ENCODE measurements at regions of chr1 and their contacts with region 1.

Region 1: GRCh38 chr1:162056043-162056442 is 13.4 kb upstream of the NOS1AP start:
- DNase-seq: peak; percentile 62 to 66
- H3K4me3 ChIP-seq: no peak overlapping the region
- H3K27ac ChIP-seq: no peak overlapping the region
- H3K4me1 ChIP-seq: no peaks in the 10 kb centered on the region
- H3K27me3 ChIP-seq: no peaks in the 10 kb centered on the region
- CTCF ChIP-seq: peak; percentile 68 to 92 (median 84)
- POLR2A ChIP-seq: no peak

Region 2: GRCh38 chr1:162177126-162177525 is 121.1 kb after region 1 on chr1:
- intact Hi-C with region 1: no loop called
- DNase-seq: no peak
- H3K4me3 ChIP-seq: no peak overlapping the region
- H3K27ac ChIP-seq: no peak overlapping the region
- H3K4me1 ChIP-seq: no peaks in the 10 kb centered on the region
- H3K27me3 ChIP-seq: no peaks in the 10 kb centered on the region
- CTCF ChIP-seq: no peak
- POLR2A ChIP-seq: no peak

Region 3: DNA sequence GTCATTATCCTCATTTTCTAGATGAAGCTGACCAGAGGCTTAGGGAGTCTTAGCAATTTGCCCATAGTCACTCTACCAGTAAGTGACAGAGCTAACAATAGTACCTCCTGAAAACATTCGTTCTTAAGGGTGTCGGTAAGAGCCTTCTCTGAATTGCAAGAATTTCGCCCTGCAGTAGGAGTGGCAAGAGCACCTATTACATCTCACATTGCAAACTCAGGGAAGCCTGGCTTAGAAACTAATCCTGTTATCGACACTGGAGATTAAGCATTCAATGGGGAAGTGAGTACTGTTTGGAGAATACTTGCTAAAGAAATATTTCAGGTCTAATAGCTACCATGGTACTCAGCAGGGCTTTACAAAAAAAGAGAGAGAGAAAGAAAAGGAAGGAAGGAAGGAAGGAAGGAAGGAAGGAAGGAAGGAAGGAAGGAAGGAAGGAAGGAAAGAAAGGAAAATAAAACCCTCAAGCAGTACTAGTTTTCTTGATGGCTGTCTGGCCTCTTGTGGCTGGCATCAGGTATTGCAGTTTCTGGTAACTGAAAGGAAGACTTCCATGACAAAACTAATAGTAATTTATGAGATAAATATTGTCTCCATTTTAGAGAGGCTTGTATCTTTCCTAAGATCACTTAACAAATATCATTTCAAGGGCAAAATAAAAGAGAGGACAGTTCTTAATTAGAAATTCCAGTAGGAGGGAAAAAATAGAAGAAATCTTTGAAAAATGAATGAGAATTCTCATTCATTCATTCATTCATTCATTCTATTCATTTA is 335.9 kb after region 1 on chr1:
- intact Hi-C with region 1: loop called (anchors 5 kb)
- DNase-seq: peak; percentile 19 to 44
- H3K4me3 ChIP-seq: no peak overlapping the region
- H3K27ac ChIP-seq: no peak overlapping the region
- H3K4me1 ChIP-seq: no peaks in the 10 kb centered on the region
- H3K27me3 ChIP-seq: no peaks in the 10 kb centered on the region
- CTCF ChIP-seq: peak; percentile 50 to 88 (median 67)
- POLR2A ChIP-seq: no peak

Measured in thyroid gland (tissue), 4 donors.